ENCODE measurements at regions of chr14 and their contacts with region 1.

Region 1: DNA sequence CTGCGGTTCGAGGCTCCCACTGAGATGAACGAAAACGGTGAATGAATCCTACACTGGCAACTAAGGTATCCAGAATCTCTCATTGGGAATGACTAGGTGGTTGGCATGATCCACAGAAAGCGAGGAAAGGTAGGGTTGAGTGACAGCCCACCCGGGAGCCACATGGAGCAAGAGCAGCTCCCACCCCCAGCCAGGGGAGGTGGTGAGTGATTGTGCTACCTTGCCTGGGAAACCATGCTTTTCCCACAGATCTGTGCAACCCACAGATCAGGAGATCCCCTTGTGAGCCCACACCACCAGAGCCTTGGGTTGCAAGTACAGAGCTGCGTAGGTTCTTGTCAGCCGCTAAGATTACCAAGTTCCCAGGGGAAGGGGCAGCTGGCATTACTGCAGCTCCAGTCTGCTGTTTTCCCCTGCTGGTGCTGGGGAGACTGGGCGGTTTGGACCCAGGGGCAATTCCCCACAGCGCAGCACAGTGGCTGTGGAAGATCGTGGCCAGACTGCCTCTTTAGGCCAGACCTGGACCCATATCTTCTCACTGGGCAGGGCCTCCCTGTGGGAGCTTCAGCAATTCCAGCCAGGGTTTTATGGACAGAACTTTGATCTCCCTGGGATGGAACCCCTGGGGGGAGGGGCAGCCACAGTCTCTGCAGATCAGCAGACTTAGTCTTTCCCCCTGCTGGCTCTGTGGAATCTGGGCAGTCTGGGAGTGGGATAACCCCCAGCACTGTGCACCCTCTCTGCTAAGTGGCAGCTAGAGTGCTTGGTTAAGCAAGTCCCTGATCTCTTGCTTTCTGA is 44.6 kb upstream of the PPP4R3A start:
- DNase-seq: peak; percentile 92 to 93
- H3K4me3 ChIP-seq: no peak overlapping the region
- H3K4me3 Mint-ChIP-seq: peak overlapping the region; percentile 39
- H3K27ac Mint-ChIP-seq: peak overlapping the region; percentile 72
- H3K4me1 ChIP-seq: peaks cover 21% of the 10 kb centered on the region
- H3K4me1 Mint-ChIP-seq: peaks cover 13% of the 10 kb centered on the region
- H3K27me3 ChIP-seq: no peaks in the 10 kb centered on the region
- H3K27me3 Mint-ChIP-seq: no peaks in the 10 kb centered on the region
- CTCF ChIP-seq: peak in 1 of 2 experiments; percentile 27

Region 2: DNA sequence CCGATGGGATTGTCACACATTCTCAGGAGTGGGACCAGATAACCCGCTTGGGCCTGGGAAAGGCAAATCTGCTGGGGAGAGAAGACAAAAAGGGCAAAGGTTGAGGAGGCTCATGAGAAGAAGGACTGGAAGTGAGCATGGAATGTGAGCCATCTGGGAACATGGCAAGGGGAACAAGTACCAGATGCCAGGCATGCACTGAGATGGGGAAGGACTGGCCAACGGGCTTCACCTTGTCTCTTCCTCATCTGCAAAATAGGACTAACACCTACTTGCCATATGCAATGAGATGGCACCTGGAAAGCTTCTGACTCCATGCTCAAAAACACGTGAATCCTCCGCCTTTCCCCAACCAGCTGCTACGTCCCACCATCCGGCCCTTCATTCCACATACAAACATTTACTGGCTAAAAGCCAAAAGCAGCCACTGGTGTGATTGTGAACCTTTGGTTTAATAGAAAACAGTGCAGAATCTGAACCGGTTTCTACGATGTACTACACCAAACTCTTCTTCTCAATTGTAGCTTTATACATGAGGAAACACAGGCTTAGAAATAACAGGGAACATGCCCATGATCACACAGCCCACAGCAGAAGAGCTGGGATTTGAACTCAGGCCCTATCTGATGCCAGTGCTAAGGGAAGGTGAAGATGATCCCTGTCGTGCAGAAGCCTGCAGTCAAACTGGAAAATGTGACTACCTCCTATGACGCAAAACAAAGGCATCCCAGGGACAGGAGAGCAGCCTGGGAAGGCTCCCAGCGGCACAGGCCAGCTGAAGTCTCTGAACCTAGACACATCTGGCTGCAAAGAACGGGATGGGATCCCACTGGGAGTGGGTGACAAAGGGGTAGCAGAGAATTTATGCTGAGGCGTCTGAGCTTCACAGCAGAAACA is 850.6 kb before region 1 on chr14:
- CTCF ChIA-PET with region 1: no interaction called
- POLR2A ChIA-PET with region 1: no interaction called
- intact Hi-C with region 1: no loop called
- DNase-seq: no peak
- H3K4me3 ChIP-seq: no peak overlapping the region
- H3K4me3 Mint-ChIP-seq: no peak overlapping the region
- H3K27ac Mint-ChIP-seq: no peak overlapping the region
- H3K4me1 ChIP-seq: no peaks in the 10 kb centered on the region
- H3K4me1 Mint-ChIP-seq: peaks cover under 1% of the 10 kb centered on the region
- H3K27me3 ChIP-seq: no peaks in the 10 kb centered on the region
- H3K27me3 Mint-ChIP-seq: no peaks in the 10 kb centered on the region
- CTCF ChIP-seq: no peak

Region 3: DNA sequence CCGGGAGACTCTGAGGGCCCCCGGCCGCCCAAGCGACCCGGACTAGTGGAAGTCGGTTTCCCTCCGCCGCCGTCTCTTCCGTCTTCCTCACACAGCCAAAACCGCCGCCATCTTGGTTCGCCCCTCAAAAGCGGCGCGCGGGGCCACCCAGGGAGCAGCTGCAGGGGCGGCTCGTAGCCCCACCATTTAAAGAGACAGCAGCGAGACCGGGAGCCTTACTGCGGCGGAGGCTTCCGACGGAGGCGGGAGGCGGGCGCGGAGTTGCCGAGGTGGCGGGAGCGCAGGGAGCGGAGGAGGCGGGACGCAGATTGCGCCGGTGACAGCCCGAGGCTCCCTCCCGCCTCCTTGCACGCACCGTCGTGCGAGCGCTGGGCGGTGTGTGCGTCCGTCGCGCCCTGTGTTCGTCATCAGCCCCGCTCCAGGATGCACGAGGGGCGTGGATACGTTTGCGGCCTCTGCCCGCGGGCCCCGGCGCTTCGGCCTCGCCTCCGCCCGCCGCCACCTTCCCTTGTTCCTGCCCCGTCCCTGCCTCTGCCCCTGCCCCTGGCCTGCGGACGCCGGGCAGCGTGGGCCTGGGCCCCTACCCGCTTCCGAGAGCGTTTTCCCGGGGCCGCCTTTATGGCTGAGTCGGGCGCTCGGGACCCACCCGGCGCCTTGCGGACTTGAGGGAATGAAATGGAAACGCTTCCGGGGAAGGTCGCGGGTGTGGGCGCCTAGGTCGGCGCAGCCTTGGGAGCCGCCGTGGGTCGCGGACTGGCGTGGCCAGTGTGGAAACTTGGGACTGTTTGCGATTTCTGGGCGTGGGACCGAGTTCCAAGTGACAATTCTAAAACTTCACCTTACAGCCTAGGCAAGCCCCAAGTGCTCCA is 44.3 kb before region 1 on chr14 and contains the start of gene PPP4R3A:
- CTCF ChIA-PET with region 1: no interaction called
- POLR2A ChIA-PET with region 1: interaction called, 5 read pairs
- intact Hi-C with region 1: loop called (anchors 1 kb)
- DNase-seq: peak; percentile 95 to 96
- H3K4me3 ChIP-seq: peak within 1 kb of the TSS; percentile 47
- H3K4me3 Mint-ChIP-seq: peak within 1 kb of the TSS; percentile 79
- H3K27ac Mint-ChIP-seq: peak within 1 kb of the TSS; percentile 98
- H3K4me1 ChIP-seq: 0 out of 2 replicates have a peak, but pooled peaks cover 11% of the 10 kb centered on the region
- H3K4me1 Mint-ChIP-seq: no peaks in the 10 kb centered on the region
- H3K27me3 ChIP-seq: no peaks in the 10 kb centered on the region
- H3K27me3 Mint-ChIP-seq: no peaks in the 10 kb centered on the region
- CTCF ChIP-seq: no peak
- total RNA-seq, gene PPP4R3A: 96.5 and 98.9 TPM in 2 replicates

Region 4: GRCh38 chr14:91536327-91536726 is 18.4 kb before region 1 on chr14:
- CTCF ChIA-PET with region 1: no interaction called
- POLR2A ChIA-PET with region 1: no interaction called
- intact Hi-C with region 1: loop called (anchors 1 kb)
- DNase-seq: no peak
- H3K4me3 ChIP-seq: no peak overlapping the region
- H3K4me3 Mint-ChIP-seq: no peak overlapping the region
- H3K27ac Mint-ChIP-seq: no peak overlapping the region
- H3K4me1 ChIP-seq: peaks cover 9% of the 10 kb centered on the region
- H3K4me1 Mint-ChIP-seq: no peaks in the 10 kb centered on the region
- H3K27me3 ChIP-seq: no peaks in the 10 kb centered on the region
- H3K27me3 Mint-ChIP-seq: no peaks in the 10 kb centered on the region
- CTCF ChIP-seq: no peak